Gastrocnemius medialis (tissue), 4 donors: ENCODE measurements at regions of chr18 and their contacts with region 1.

Region 1: DNA sequence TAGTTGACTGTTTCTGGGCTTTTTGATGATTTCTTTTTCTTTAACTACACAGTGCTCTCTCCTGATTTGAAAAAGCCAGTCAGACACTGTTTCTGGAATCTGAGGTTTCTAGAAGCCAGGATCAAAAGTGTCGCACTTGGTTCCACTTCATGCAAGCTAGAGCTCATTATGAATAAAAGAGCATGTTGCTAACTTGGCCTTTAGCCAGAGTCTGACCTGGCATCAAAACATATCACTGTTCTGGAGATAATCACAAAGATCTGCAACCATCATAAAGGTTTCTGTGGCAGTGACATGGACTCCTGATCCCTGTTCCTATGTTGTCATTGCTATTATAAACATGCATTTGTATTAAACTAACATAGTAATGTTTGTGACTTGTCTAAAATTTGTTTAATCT is 76.1 kb upstream of the MAPRE2 start:
- DNase-seq: no peak
- ATAC-seq: no peak
- H3K4me3 ChIP-seq: no peak overlapping the region
- H3K27ac ChIP-seq: peak overlapping the region in 3 of 4 donors; percentile 19 to 95 (median 22)
- H3K4me1 ChIP-seq: peaks cover 28 to 41% of the 10 kb centered on the region in 2 donors
- H3K27me3 ChIP-seq: no peaks in the 10 kb centered on the region
- CTCF ChIP-seq: no peak
- POLR2A ChIP-seq: no peak

Region 2: DNA sequence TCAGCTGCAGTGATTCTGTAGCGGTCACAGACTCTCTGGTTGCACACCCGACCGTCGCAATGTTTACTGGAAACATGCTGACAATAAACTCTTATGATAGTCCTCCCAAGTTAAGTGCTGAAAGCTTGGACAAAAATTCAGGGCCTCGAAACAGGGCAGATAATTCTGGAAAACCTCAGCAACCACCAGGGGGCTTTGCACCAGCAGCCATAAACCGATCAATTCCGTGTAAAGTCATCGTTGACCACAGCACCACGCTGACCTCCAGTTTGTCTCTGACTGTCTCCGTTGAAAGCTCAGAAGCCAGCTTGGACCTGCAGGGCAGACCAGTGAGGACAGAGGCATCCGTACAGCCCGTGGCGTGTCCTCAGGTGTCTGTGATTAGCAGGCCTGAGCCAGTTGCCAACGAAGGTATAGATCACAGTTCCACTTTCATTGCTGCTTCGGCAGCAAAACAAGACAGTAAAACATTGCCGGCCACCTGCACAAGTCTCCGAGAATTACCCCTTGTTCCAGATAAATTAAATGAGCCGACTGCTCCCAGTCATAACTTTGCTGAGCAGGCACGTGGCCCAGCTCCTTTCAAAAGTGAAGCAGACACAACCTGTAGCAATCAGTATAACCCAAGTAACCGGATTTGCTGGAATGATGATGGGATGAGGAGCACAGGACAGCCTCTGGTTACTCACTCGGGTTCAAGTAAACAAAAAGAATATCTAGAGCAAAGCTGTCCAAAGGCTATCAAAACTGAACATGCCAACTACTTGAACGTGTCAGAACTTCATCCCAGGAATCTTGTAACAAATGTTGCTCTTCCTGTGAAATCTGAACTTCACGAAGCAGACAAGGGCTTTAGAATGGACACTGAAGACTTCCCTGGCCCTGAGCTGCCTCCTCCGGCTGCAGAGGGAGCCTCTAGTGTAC is 1220.8 kb before region 1 on chr18:
- in situ Hi-C with region 1: no loop called
- intact Hi-C with region 1: no loop called
- DNase-seq: no peak
- ATAC-seq: no peak
- H3K4me3 ChIP-seq: no peak overlapping the region
- H3K27ac ChIP-seq: no peak overlapping the region
- H3K4me1 ChIP-seq: no peaks in the 10 kb centered on the region
- H3K27me3 ChIP-seq: no peaks in the 10 kb centered on the region
- CTCF ChIP-seq: no peak
- POLR2A ChIP-seq: no peak

Region 3: GRCh38 chr18:34297287-34297686 is 667.8 kb before region 1 on chr18:
- in situ Hi-C with region 1: no loop called
- intact Hi-C with region 1: no loop called
- DNase-seq: no peak
- ATAC-seq: no peak
- H3K4me3 ChIP-seq: no peak overlapping the region
- H3K27ac ChIP-seq: no peak overlapping the region
- H3K4me1 ChIP-seq: no peaks in the 10 kb centered on the region
- H3K27me3 ChIP-seq: no peaks in the 10 kb centered on the region
- CTCF ChIP-seq: no peak
- POLR2A ChIP-seq: no peak

Region 4: GRCh38 chr18:34912010-34912721 is 52.9 kb before region 1 on chr18:
- in situ Hi-C with region 1: no loop called
- intact Hi-C with region 1: loop called (anchors 5 kb)
- DNase-seq: no peak
- ATAC-seq: no peak
- H3K4me3 ChIP-seq: no peak overlapping the region
- H3K27ac ChIP-seq: peak overlapping the region; percentile 88 to 96 (median 94)
- H3K4me1 ChIP-seq: peaks cover 35 to 40% of the 10 kb centered on the region in 2 donors
- H3K27me3 ChIP-seq: no peaks in the 10 kb centered on the region
- CTCF ChIP-seq: no peak
- POLR2A ChIP-seq: no peak